ENCODE measurements at regions of chr7 and their contacts with region 1.

Region 1: GRCh38 chr7:44196450-44196872 is 4.3 kb upstream of the YKT6 start:
- DNase-seq: no peak
- ATAC-seq: peak; percentile 60
- H3K4me3 ChIP-seq: no peak overlapping the region
- H3K27ac ChIP-seq: no peak overlapping the region
- H3K4me1 ChIP-seq: no peaks in the 10 kb centered on the region
- H3K27me3 ChIP-seq: no peaks in the 10 kb centered on the region
- CTCF ChIP-seq: peak; percentile 65 to 76 (median 70)
- EP300 ChIP-seq: no peak
- POLR2A ChIP-seq: no peak
- RAD21 ChIP-seq: peak; percentile 72

Region 2: DNA sequence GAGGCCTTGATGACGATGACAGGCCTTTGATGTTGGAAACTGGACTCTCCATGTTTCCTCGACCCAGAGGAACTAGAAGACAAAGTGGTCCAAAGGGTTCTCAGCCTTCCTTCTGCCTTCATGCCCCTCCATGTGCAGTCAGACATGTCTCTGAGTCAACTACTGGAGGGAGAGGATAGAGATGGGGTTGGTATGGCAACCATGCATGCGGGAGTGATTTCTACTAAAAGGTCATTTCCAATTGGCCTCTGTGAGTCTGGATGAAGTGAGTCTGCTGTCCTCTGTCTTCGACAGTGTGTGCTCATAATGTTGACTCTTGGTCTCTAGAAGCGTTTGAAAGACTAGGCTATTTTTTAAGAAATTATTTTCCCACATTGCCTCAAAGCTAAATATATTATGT is 584.3 kb before region 1 on chr7:
- CTCF ChIA-PET with region 1: no interaction called
- POLR2A ChIA-PET with region 1: no interaction called
- RAD21 ChIA-PET with region 1: no interaction called
- SMC1A ChIA-PET with region 1: no interaction called
- in situ Hi-C with region 1: no loop called
- intact Hi-C with region 1: no loop called
- DNase-seq: no peak
- ATAC-seq: no peak; the same call in 1 of the 3 replicates
- H3K4me3 ChIP-seq: no peak overlapping the region
- H3K27ac ChIP-seq: no peak overlapping the region
- H3K4me1 ChIP-seq: peaks cover 11% of the 10 kb centered on the region
- H3K27me3 ChIP-seq: no peaks in the 10 kb centered on the region
- CTCF ChIP-seq: no peak
- EP300 ChIP-seq: no peak
- POLR2A ChIP-seq: no peak
- RAD21 ChIP-seq: no peak

Region 3: GRCh38 chr7:44072364-44073231 is 123.9 kb before region 1 on chr7:
- CTCF ChIA-PET with region 1: interaction called, 6 read pairs
- POLR2A ChIA-PET with region 1: no interaction called
- RAD21 ChIA-PET with region 1: no interaction called
- SMC1A ChIA-PET with region 1: no interaction called
- in situ Hi-C with region 1: no loop called
- intact Hi-C with region 1: loop called (anchors 2 kb)
- DNase-seq: no peak
- ATAC-seq: peak; percentile 75
- H3K4me3 ChIP-seq: no peak overlapping the region
- H3K27ac ChIP-seq: no peak overlapping the region
- H3K4me1 ChIP-seq: no peaks in the 10 kb centered on the region; the same call in none of the 2 replicates
- H3K27me3 ChIP-seq: no peaks in the 10 kb centered on the region
- CTCF ChIP-seq: peak; percentile 46 to 63 (median 61)
- EP300 ChIP-seq: no peak
- POLR2A ChIP-seq: peak; percentile 52
- RAD21 ChIP-seq: peak; percentile 53

Region 4: GRCh38 chr7:44082541-44083207 is 113.8 kb before region 1 on chr7:
- CTCF ChIA-PET with region 1: interaction called, 6 read pairs
- POLR2A ChIA-PET with region 1: interaction called, 7 read pairs
- RAD21 ChIA-PET with region 1: interaction called, 6 read pairs
- SMC1A ChIA-PET with region 1: interaction called, 3 read pairs
- in situ Hi-C with region 1: no loop called
- intact Hi-C with region 1: loop called (anchors 2 kb)
- DNase-seq: peak; percentile 88
- ATAC-seq: peak; percentile 92
- H3K4me3 ChIP-seq: peak overlapping the region; percentile 65
- H3K27ac ChIP-seq: peak overlapping the region; percentile 61
- H3K4me1 ChIP-seq: peaks cover 18% of the 10 kb centered on the region
- H3K27me3 ChIP-seq: no peaks in the 10 kb centered on the region
- CTCF ChIP-seq: no peak
- EP300 ChIP-seq: no peak
- POLR2A ChIP-seq: no peak; the same call in 1 of the 2 replicates
- RAD21 ChIP-seq: no peak

Region 5: DNA sequence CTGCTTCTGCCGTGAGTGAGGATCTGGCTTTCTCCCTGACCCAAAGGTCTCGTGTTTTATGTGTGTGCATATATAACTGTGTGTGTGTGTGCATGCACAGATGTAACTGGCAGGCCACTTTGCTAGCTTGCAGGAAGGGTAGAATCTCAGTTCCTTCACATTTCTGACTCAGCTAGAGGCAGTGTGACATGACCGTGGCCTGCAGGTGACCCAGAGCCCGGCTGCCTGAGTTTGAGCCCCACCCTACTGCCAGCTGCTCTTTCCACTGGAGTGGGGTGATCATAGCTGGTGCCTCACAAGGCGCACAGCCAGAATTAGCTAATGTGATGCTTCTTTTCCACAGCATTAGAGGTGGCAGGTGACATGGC is 46.0 kb before region 1 on chr7:
- CTCF ChIA-PET with region 1: interaction called, 3 read pairs
- POLR2A ChIA-PET with region 1: no interaction called
- RAD21 ChIA-PET with region 1: no interaction called
- SMC1A ChIA-PET with region 1: no interaction called
- in situ Hi-C with region 1: no loop called
- intact Hi-C with region 1: loop called (anchors 5 kb)
- DNase-seq: peak; percentile 23
- ATAC-seq: peak; percentile 78
- H3K4me3 ChIP-seq: no peak overlapping the region
- H3K27ac ChIP-seq: no peak overlapping the region
- H3K4me1 ChIP-seq: peaks cover 5% of the 10 kb centered on the region
- H3K27me3 ChIP-seq: no peaks in the 10 kb centered on the region; a peak in 2 of 4 replicates
- CTCF ChIP-seq: no peak
- EP300 ChIP-seq: no peak
- POLR2A ChIP-seq: no peak
- RAD21 ChIP-seq: no peak